ENCODE measurements at regions of chr2 and their contacts with region 1.

Region 1: GRCh38 chr2:231514951-231515297 is 15.3 kb downstream of the NMUR1 start:
- DNase-seq: no peak
- ATAC-seq: no peak

Region 2: DNA sequence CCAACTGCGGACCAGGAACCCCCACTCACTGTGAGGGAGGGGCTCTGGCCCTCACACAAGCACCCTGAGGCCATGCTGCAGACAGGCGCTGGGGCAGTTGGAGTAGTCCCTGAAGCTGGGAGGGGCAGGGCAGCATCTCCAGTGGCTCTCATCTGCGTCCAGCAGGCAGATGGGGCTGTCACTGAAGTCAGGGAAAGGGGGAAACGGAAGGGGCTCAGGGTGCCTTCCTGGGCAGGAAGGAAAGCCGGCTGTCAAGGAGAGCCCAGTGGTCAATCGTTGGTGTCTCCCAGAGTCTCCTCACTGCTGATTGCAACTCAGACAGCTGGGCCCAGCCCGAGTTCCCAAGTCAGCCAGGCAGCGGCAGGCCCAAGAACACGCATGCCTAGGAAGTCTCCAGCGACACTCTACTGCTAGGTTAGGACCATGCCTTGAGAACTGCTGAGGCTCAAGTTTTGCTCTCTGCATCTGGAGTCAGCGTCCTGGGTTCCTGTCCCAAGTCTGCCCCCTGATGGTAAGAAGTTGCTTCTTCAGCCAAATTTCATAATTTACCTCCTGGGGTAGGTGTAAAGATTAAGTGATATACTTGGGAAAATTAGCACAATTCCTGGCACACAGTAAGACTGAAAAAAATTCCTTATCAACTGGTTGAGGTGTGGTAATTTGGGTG is 42.8 kb after region 1 on chr2:
- intact Hi-C with region 1: loop called in 1 of 2 experiments (anchors 5 kb)
- DNase-seq: peak; percentile 54 to 66
- ATAC-seq: peak; percentile 88

Measured in left colon (tissue), 2 donors.